CD8-positive, alpha-beta T cell (primary cell): ENCODE measurements at regions of chr15 and their contacts with region 1.

Region 1: GRCh38 chr15:52912169-52912568 is 122.0 kb upstream of the ONECUT1 start:
- DNase-seq: no peak
- ATAC-seq: no peak
- H3K4me3 ChIP-seq: no peak overlapping the region
- H3K4me3 Mint-ChIP-seq: no peak overlapping the region
- H3K27ac ChIP-seq: no peak overlapping the region
- H3K27ac Mint-ChIP-seq: no peak overlapping the region
- H3K4me1 ChIP-seq: no peaks in the 10 kb centered on the region
- H3K4me1 Mint-ChIP-seq: no peaks in the 10 kb centered on the region
- H3K27me3 ChIP-seq: no peaks in the 10 kb centered on the region
- H3K27me3 Mint-ChIP-seq: peaks cover 12% of the 10 kb centered on the region
- CTCF ChIP-seq: no peak

Region 2: DNA sequence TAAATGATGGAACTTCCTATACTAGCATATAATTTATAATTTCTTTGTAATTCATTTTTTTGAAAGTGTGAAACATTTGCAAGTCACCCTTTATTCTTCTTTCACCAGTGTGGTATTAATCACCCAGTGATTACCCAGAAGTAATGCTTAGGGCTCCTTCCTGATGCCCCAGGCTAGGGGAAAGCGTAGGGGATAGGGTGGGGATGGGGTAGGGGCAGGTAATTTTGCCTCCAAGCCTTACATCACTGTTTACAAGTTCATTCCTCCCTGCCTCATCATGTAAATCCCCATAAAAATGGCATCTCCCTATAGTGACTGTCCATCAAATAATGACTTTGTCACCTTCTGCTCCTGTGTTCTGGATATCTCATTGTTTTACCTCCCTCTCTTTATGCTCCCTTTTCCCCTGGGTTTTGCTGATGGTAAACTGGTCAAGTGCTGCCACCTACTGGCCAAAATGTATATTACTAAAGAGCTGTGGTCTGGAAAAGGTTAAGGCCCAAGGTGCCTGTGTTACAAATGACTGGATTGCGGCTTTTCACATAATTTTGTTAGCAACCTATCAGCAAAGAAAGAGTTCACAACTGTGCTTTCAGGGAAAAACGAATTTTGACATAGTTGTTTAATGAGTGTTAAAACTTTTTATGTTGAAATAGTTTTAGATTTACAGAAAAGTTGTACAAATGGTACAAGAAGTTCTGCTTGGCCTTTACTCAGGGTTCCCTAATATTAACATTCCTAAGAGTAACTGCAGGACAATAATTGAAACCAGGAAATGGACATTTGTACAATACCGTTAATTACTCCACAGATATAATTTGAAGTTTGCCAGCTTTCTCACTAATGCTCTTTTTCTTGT is 176.7 kb before region 1 on chr15:
- CTCF ChIA-PET with region 1: no interaction called
- POLR2A ChIA-PET with region 1: no interaction called
- intact Hi-C with region 1: no loop called
- DNase-seq: peak; percentile 39 to 83 (median 64)
- ATAC-seq: peak; percentile 89
- H3K4me3 ChIP-seq: no peak overlapping the region
- H3K4me3 Mint-ChIP-seq: no peak overlapping the region
- H3K27ac ChIP-seq: no peak overlapping the region
- H3K27ac Mint-ChIP-seq: no peak overlapping the region
- H3K4me1 ChIP-seq: peaks cover 3% of the 10 kb centered on the region
- H3K4me1 Mint-ChIP-seq: peaks cover 5% of the 10 kb centered on the region
- H3K27me3 ChIP-seq: no peaks in the 10 kb centered on the region
- H3K27me3 Mint-ChIP-seq: peaks cover 7% of the 10 kb centered on the region
- CTCF ChIP-seq: peak; percentile 95

Region 3: GRCh38 chr15:53936137-53936536 is 1024.0 kb after region 1 on chr15:
- CTCF ChIA-PET with region 1: no interaction called
- POLR2A ChIA-PET with region 1: no interaction called
- intact Hi-C with region 1: loop called in 1 of 2 experiments (anchors 10 kb)
- DNase-seq: no peak
- ATAC-seq: no peak
- H3K4me3 ChIP-seq: no peak overlapping the region
- H3K4me3 Mint-ChIP-seq: no peak overlapping the region
- H3K27ac ChIP-seq: no peak overlapping the region
- H3K27ac Mint-ChIP-seq: no peak overlapping the region
- H3K4me1 ChIP-seq: no peaks in the 10 kb centered on the region
- H3K4me1 Mint-ChIP-seq: no peaks in the 10 kb centered on the region
- H3K27me3 ChIP-seq: no peaks in the 10 kb centered on the region
- H3K27me3 Mint-ChIP-seq: no peaks in the 10 kb centered on the region
- CTCF ChIP-seq: no peak